ENCODE measurements at regions of chr16 and their contacts with region 1.

Region 1: DNA sequence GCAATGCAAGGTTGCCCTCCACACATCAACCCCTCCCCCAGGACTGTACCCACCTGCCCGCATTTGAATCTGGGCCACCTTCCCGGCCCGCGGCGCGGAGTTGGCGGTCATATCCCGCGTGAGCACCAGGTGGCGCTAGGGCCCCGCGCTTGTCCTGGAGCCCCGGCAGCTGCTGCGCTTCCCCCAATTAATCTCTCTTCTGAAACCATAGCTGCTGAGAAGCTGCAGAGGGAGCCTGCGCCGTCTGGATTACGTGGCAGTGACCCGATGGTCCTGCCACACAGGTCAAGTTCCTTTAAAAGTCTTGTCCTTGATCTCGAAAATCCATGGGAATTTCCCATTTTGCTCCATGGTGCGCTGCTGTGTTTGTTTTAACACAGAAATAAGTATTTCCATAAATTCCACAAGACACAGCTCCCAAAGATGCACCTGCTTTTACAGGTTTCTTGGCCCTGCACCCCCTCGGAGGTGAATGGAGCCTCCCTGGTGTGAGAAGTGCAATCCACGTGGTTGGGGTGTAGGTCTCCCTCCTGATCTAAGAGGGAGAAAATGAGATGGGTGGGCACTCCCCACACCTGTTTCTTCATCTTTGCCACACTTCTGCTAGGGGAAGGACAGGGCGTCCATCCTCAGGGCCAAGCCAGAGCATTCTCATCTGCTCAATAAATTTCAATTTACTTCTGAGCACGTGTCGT is 22.1 kb downstream of the COX4I1 start:
- DNase-seq: peak; percentile 90
- ATAC-seq: peak; percentile 94
- H3K4me3 ChIP-seq: no peak overlapping the region
- H3K4me3 Mint-ChIP-seq: no peak overlapping the region
- H3K27ac ChIP-seq: no peak overlapping the region
- H3K27ac Mint-ChIP-seq: peak overlapping the region; percentile 21
- H3K4me1 ChIP-seq: peaks cover 11 to 32% of the 10 kb centered on the region in 2 donors
- H3K4me1 Mint-ChIP-seq: peaks cover 29% of the 10 kb centered on the region
- H3K27me3 ChIP-seq: no peaks in the 10 kb centered on the region
- H3K27me3 Mint-ChIP-seq: no peaks in the 10 kb centered on the region
- CTCF ChIP-seq: peak; percentile 99

Region 2: GRCh38 chr16:85847681-85848601 is 26.4 kb after region 1 on chr16:
- CTCF ChIA-PET with region 1: interaction called, 13 read pairs
- POLR2A ChIA-PET with region 1: no interaction called
- intact Hi-C with region 1: no loop called
- DNase-seq: no peak
- ATAC-seq: no peak
- H3K4me3 ChIP-seq: no peak overlapping the region
- H3K4me3 Mint-ChIP-seq: no peak overlapping the region
- H3K27ac ChIP-seq: no peak overlapping the region
- H3K27ac Mint-ChIP-seq: no peak overlapping the region
- H3K4me1 ChIP-seq: peaks cover 7 to 12% of the 10 kb centered on the region in 2 donors
- H3K4me1 Mint-ChIP-seq: peaks cover 21% of the 10 kb centered on the region
- H3K27me3 ChIP-seq: no peaks in the 10 kb centered on the region
- H3K27me3 Mint-ChIP-seq: peaks cover 12% of the 10 kb centered on the region
- CTCF ChIP-seq: no peak

Region 3: DNA sequence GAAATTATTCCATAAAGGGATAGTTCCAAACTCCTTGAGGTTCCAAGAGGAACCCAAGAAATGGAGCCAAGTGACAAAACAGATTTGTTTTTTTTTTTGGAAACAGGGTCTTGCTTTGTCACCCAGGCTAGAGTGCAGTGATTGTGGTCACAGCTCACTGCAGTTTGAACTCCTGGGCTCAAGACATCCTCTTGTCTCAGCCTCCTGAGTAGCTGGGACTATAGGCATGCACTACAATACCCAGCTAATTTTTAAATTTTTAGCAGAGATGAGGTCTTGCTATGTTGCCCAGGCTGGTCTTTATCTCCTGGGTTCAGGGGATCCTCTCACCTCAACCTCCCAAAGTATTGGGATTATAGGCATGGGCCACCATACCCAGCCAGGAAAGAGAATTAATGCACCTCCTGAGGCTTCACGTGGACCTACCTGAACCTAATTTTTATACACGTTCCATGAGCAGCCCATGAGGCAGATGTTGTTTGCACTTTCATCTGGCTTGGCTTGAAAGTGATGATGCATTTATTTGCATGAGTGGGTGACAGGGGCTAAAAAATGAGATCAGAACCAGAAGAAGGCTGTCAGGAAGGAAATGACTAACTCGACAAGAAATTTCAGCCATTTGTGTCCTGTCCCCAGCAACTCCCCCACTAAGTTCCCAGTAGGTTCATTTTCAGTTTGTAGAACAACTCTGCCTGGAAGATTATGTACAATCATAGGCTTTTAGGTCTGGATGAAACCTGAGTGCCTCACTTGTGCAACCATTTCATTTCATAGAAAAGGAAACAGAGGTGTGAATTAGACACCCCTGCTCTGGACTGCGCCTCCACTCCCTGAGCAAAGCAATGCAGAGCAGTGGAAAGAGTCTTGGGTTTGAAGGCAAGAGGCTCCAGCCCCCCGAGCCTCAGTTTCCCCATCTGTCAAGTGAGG is 67.1 kb after region 1 on chr16:
- CTCF ChIA-PET with region 1: interaction called, 364 read pairs
- POLR2A ChIA-PET with region 1: interaction called, 7 read pairs
- intact Hi-C with region 1: no loop called
- DNase-seq: peak; percentile 83
- ATAC-seq: peak; percentile 82
- H3K4me3 ChIP-seq: peak overlapping the region in 2 of 5 experiments; percentile 13 to 16
- H3K4me3 Mint-ChIP-seq: peak overlapping the region; percentile 39
- H3K27ac ChIP-seq: peak overlapping the region; percentile 64 to 65
- H3K27ac Mint-ChIP-seq: peak overlapping the region; percentile 82
- H3K4me1 ChIP-seq: peaks cover 20 to 23% of the 10 kb centered on the region in 2 donors
- H3K4me1 Mint-ChIP-seq: peaks cover 46% of the 10 kb centered on the region
- H3K27me3 ChIP-seq: no peaks in the 10 kb centered on the region
- H3K27me3 Mint-ChIP-seq: no peaks in the 10 kb centered on the region
- CTCF ChIP-seq: no peak

Region 4: GRCh38 chr16:85923153-85924021 is 101.8 kb after region 1 on chr16:
- CTCF ChIA-PET with region 1: interaction called, 15 read pairs
- POLR2A ChIA-PET with region 1: no interaction called
- intact Hi-C with region 1: no loop called
- DNase-seq: no peak
- ATAC-seq: no peak
- H3K4me3 ChIP-seq: no peak overlapping the region
- H3K4me3 Mint-ChIP-seq: no peak overlapping the region
- H3K27ac ChIP-seq: no peak overlapping the region
- H3K27ac Mint-ChIP-seq: peak overlapping the region; percentile 69
- H3K4me1 ChIP-seq: peaks cover 30 to 39% of the 10 kb centered on the region in 2 donors
- H3K4me1 Mint-ChIP-seq: peaks cover 49% of the 10 kb centered on the region
- H3K27me3 ChIP-seq: no peaks in the 10 kb centered on the region
- H3K27me3 Mint-ChIP-seq: no peaks in the 10 kb centered on the region
- CTCF ChIP-seq: no peak

Region 5: GRCh38 chr16:85963753-85964285 is 142.2 kb after region 1 on chr16:
- CTCF ChIA-PET with region 1: interaction called, 10 read pairs
- POLR2A ChIA-PET with region 1: interaction called, 3 read pairs
- intact Hi-C with region 1: no loop called
- DNase-seq: no peak
- ATAC-seq: no peak
- H3K4me3 ChIP-seq: no peak overlapping the region
- H3K4me3 Mint-ChIP-seq: no peak overlapping the region
- H3K27ac ChIP-seq: no peak overlapping the region
- H3K27ac Mint-ChIP-seq: no peak overlapping the region
- H3K4me1 ChIP-seq: peaks cover 17 to 34% of the 10 kb centered on the region in 2 donors
- H3K4me1 Mint-ChIP-seq: peaks cover 53% of the 10 kb centered on the region
- H3K27me3 ChIP-seq: no peaks in the 10 kb centered on the region
- H3K27me3 Mint-ChIP-seq: no peaks in the 10 kb centered on the region
- CTCF ChIP-seq: no peak

Region 6: GRCh38 chr16:86022381-86022960 is 200.9 kb after region 1 on chr16:
- CTCF ChIA-PET with region 1: interaction called, 370 read pairs
- POLR2A ChIA-PET with region 1: interaction called, 4 read pairs
- intact Hi-C with region 1: no loop called
- DNase-seq: no peak
- ATAC-seq: no peak
- H3K4me3 ChIP-seq: no peak overlapping the region
- H3K4me3 Mint-ChIP-seq: no peak overlapping the region
- H3K27ac ChIP-seq: no peak overlapping the region
- H3K27ac Mint-ChIP-seq: no peak overlapping the region
- H3K4me1 ChIP-seq: peaks cover 11 to 13% of the 10 kb centered on the region in 2 donors
- H3K4me1 Mint-ChIP-seq: peaks cover 11% of the 10 kb centered on the region
- H3K27me3 ChIP-seq: peaks cover 0 to 35% (median 5%) of the 10 kb centered on the region in 4 experiments
- H3K27me3 Mint-ChIP-seq: peaks cover 8% of the 10 kb centered on the region
- CTCF ChIP-seq: no peak